ENCODE measurements at regions of chr3 and their contacts with region 1.

Region 1: GRCh38 chr3:32467333-32468070 is 35.1 kb downstream of the CMTM6 start:
- DNase-seq: peak in 1 of 2 donors; percentile 81
- H3K4me3 ChIP-seq: peak overlapping the region; percentile 34 to 65
- H3K27ac ChIP-seq: no peak overlapping the region
- H3K4me1 ChIP-seq: peaks cover 0 to 5% of the 10 kb centered on the region in 2 donors
- H3K27me3 ChIP-seq: no peaks in the 10 kb centered on the region
- CTCF ChIP-seq: peak; percentile 91 to 99 (median 97)

Region 2: GRCh38 chr3:31188112-31188511 is 1279.4 kb before region 1 on chr3:
- intact Hi-C with region 1: no loop called
- DNase-seq: peak in 1 of 2 donors; percentile 74
- H3K4me3 ChIP-seq: no peak overlapping the region
- H3K27ac ChIP-seq: peak overlapping the region; percentile 45 to 72
- H3K4me1 ChIP-seq: peaks cover 0 to 21% of the 10 kb centered on the region in 2 donors
- H3K27me3 ChIP-seq: no peaks in the 10 kb centered on the region
- CTCF ChIP-seq: peak in 1 of 3 experiments; percentile 25

Region 3: GRCh38 chr3:32296256-32297204 is 171.0 kb before region 1 on chr3:
- intact Hi-C with region 1: loop called (anchors 1 kb)
- DNase-seq: peak in 1 of 2 donors; percentile 76
- H3K4me3 ChIP-seq: no peak overlapping the region
- H3K27ac ChIP-seq: no peak overlapping the region
- H3K4me1 ChIP-seq: no peaks in the 10 kb centered on the region
- H3K27me3 ChIP-seq: no peaks in the 10 kb centered on the region
- CTCF ChIP-seq: peak; percentile 64 to 89 (median 79)

Region 4: DNA sequence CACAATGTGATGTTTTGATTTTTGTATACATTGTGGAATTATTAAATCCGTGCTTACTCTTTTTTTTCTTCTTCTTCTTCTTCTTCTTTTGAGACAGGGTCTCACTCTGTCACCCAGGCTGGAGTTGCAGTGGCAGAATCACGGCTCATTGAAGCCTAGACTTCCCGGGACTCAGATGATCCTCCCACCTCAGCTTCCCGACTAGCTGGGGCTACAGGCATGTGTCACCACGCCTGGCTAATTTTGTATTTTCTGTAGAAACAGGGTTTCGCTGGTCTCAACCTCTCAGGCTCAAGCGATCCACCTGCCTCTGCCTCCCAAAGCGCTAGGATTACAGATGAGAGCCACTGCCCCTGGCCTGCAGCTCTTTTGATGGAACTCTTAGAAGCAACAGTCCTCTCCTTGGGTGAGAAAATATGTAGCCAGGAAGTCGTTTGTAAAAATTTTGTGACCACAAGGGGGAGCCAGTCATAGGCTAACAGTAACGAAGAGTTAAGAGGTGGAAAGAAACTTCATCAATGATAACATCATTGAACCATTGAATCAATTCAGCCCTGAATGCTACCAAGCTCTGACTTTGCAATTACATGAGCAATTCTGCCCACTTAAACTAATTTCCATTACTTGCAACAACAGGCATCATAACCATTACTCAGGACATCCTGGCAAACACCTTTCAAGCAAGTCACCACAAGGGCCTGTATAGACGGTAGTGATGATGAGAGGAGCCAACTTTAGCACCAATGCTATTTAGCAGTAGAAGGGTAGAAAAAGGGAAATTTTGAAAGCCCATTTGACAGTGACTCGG is 92.5 kb before region 1 on chr3:
- intact Hi-C with region 1: loop called (anchors 1 kb)
- DNase-seq: peak in 1 of 2 donors; percentile 79
- H3K4me3 ChIP-seq: no peak overlapping the region
- H3K27ac ChIP-seq: no peak overlapping the region
- H3K4me1 ChIP-seq: no peaks in the 10 kb centered on the region
- H3K27me3 ChIP-seq: no peaks in the 10 kb centered on the region
- CTCF ChIP-seq: peak; percentile 63 to 70 (median 64)

Region 5: GRCh38 chr3:32391643-32392535 is 75.6 kb before region 1 on chr3 and contains the start of gene CMTM7:
- intact Hi-C with region 1: loop called (anchors 5 kb)
- DNase-seq: peak in 1 of 2 donors; percentile 87
- H3K4me3 ChIP-seq: peak within 1 kb of the TSS; percentile 87 to 89
- H3K27ac ChIP-seq: peak within 1 kb of the TSS; percentile 62 to 71
- H3K4me1 ChIP-seq: peaks cover 0 to 3% of the 10 kb centered on the region in 2 donors
- H3K27me3 ChIP-seq: no peaks in the 10 kb centered on the region
- CTCF ChIP-seq: no peak
- total RNA-seq, gene CMTM7: 21.9 TPM

Region 6: GRCh38 chr3:32570421-32571191 is 103.1 kb after region 1 on chr3 and contains the start of gene DYNC1LI1:
- intact Hi-C with region 1: no loop called
- DNase-seq: peak; percentile 81 to 96
- H3K4me3 ChIP-seq: peak within 1 kb of the TSS; percentile 89 to 92
- H3K27ac ChIP-seq: peak within 1 kb of the TSS; percentile 96 to 100
- H3K4me1 ChIP-seq: peaks cover 0 to 7% of the 10 kb centered on the region in 2 donors
- H3K27me3 ChIP-seq: no peaks in the 10 kb centered on the region
- CTCF ChIP-seq: no peak
- total RNA-seq, gene DYNC1LI1: 22.1 TPM